ENCODE measurements at regions of chr9 and their contacts with region 1.

Region 1: DNA sequence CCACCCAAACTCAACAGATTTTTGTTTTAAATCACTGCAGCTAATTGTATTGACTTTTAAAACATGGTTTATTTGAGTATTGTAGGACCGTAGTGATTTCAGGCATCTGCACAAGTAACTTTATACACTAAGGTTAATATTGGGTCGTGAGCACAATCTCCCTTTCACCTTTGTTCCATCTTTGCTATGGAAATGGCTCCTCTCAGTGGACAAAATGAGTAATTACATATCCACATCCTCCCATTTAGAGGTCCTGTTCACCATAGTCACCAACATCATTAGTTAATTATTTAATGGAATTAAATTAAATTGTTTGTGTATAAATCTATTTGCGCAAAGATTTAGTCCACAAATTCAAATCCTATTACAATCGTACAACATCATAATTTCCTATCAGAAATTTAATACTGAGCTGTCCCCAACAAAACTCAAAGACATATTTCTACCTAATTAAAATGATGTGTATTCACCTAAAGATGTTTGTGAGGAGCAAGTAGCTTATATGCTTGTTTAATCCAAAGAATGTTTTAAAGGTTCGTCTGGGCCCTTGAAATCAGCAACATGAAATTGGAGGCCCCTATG is 173.0 kb upstream of the DAPK1 start:
- DNase-seq: peak in 1 of 2 donors; percentile 73
- ATAC-seq: peak; percentile 67 to 77 (median 73)
- H3K4me3 ChIP-seq: no peak overlapping the region
- H3K4me3 Mint-ChIP-seq: no peak overlapping the region
- H3K27ac ChIP-seq: no peak overlapping the region
- H3K27ac Mint-ChIP-seq: no peak overlapping the region
- H3K4me1 ChIP-seq: no peaks in the 10 kb centered on the region
- H3K4me1 Mint-ChIP-seq: peaks cover 0 to 11% of the 10 kb centered on the region in 2 donors
- H3K27me3 ChIP-seq: no peaks in the 10 kb centered on the region
- H3K27me3 Mint-ChIP-seq: peaks cover 14 to 17% of the 10 kb centered on the region in 2 donors
- CTCF ChIP-seq: peak; percentile 81

Region 2: GRCh38 chr9:86413966-86414880 is 910.5 kb before region 1 on chr9:
- intact Hi-C with region 1: loop called (anchors 1 kb)
- DNase-seq: peak in 1 of 2 donors; percentile 40
- ATAC-seq: peak in 1 of 3 donors; percentile 53
- H3K4me3 ChIP-seq: no peak overlapping the region
- H3K4me3 Mint-ChIP-seq: no peak overlapping the region
- H3K27ac ChIP-seq: no peak overlapping the region
- H3K27ac Mint-ChIP-seq: no peak overlapping the region
- H3K4me1 ChIP-seq: no peaks in the 10 kb centered on the region
- H3K4me1 Mint-ChIP-seq: no peaks in the 10 kb centered on the region
- H3K27me3 ChIP-seq: no peaks in the 10 kb centered on the region
- H3K27me3 Mint-ChIP-seq: peaks cover 11 to 14% of the 10 kb centered on the region in 2 donors
- CTCF ChIP-seq: peak; percentile 83

Region 3: GRCh38 chr9:86434039-86434726 is 890.5 kb before region 1 on chr9:
- intact Hi-C with region 1: loop called (anchors 1 kb)
- DNase-seq: peak in 1 of 2 donors; percentile 56
- ATAC-seq: peak in 1 of 3 donors; percentile 62
- H3K4me3 ChIP-seq: no peak overlapping the region
- H3K4me3 Mint-ChIP-seq: no peak overlapping the region
- H3K27ac ChIP-seq: no peak overlapping the region
- H3K27ac Mint-ChIP-seq: no peak overlapping the region
- H3K4me1 ChIP-seq: no peaks in the 10 kb centered on the region
- H3K4me1 Mint-ChIP-seq: no peaks in the 10 kb centered on the region
- H3K27me3 ChIP-seq: peaks cover 2% of the 10 kb centered on the region
- H3K27me3 Mint-ChIP-seq: peaks cover 29 to 52% of the 10 kb centered on the region in 2 donors
- CTCF ChIP-seq: peak; percentile 64

Region 4: DNA sequence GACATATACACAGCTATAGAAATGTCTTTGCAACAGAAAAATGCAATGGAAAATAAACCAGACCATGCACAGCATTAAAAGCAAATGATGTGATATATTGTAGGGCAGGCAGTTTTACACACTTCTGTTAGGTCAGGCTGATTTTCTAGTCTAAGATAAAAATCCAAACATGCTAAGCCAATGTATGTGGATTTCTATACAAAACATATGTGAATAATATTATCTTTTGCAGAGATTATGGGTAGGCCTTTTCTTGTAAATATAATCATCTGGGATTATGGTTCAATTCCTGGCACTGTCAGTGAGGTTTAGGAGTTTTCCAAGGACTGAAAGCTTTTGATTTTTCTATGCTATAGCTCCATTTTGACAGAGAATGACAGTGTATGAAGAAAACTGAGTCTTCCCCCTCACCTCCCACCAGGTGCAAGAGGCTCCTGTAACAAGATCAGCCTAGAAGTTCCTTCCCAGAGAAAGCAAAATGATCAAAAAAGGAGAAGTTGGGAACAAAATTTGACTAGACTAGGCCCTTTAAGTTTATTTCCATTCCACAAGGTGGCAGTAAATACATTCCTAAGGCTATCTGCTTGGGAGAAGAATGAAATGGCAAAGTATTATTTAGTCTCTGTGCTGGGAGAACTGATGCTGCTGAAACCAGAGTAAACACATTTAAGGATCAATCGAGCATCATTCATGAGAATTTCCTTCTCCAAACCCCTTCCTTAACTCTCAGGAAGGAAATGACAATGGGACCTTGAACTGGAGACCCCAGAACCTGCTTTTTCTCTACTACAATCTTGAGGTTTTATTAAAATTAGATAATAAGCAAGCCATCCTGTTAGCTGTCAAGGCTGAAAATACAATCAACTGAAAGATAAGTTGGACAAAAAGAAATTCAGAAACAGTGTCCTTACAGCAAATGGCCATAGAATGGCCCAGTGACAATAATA is 837.5 kb before region 1 on chr9:
- intact Hi-C with region 1: loop called (anchors 1 kb)
- DNase-seq: peak in 1 of 2 donors; percentile 32
- ATAC-seq: no peak
- H3K4me3 ChIP-seq: no peak overlapping the region
- H3K4me3 Mint-ChIP-seq: no peak overlapping the region
- H3K27ac ChIP-seq: no peak overlapping the region
- H3K27ac Mint-ChIP-seq: no peak overlapping the region
- H3K4me1 ChIP-seq: no peaks in the 10 kb centered on the region
- H3K4me1 Mint-ChIP-seq: peaks cover 9 to 10% of the 10 kb centered on the region in 2 donors
- H3K27me3 ChIP-seq: no peaks in the 10 kb centered on the region
- H3K27me3 Mint-ChIP-seq: peaks cover 2 to 3% of the 10 kb centered on the region in 2 donors
- CTCF ChIP-seq: peak; percentile 40

Region 5: DNA sequence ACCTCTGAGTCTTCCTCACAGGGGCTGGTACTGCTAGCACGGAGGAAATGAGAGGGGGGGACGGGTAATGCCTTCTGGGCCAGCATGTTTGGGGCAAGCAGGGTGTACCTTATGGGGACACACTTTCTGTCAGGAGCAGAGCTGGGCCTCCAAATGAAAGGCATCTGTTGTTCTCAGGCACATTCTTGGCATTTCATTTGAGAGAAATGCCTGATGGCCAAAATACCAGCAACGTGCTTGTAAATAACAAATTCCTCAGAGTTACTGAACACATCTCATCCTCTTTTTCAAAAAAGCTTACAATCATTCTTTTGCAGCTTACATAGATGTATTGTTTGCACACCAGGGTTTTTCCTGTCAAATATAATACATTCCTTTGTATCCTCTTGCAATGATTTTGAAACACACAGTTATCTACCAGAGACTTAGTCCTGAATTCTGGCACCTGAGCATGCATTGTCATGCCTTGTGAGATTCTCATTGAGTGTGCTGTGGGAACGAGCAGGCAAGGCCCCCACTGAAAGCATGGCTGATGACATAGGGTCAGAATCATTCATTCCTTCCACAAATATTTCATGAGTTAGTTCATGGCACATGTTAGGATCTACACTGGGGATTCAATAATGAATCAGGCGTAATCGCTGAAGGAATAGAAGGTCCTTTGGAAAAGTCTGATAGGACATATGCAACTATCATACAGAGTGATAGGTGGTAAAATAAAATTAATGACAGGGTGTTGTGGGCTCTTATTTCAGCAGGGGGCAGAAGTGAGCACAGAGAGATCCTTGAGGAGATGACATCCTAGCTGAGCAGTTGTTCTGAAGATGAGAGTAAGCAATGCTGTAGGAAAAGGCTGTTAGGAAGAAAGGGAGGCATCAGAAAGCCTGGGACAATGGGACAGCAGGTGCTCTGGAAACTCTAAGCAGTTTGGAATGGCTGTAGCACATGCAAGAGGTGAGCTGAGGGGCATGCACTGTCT is 709.5 kb before region 1 on chr9:
- intact Hi-C with region 1: loop called (anchors 1 kb)
- DNase-seq: peak in 1 of 2 donors; percentile 23
- ATAC-seq: no peak
- H3K4me3 ChIP-seq: no peak overlapping the region
- H3K4me3 Mint-ChIP-seq: no peak overlapping the region
- H3K27ac ChIP-seq: no peak overlapping the region
- H3K27ac Mint-ChIP-seq: no peak overlapping the region
- H3K4me1 ChIP-seq: no peaks in the 10 kb centered on the region
- H3K4me1 Mint-ChIP-seq: no peaks in the 10 kb centered on the region
- H3K27me3 ChIP-seq: no peaks in the 10 kb centered on the region
- H3K27me3 Mint-ChIP-seq: peaks cover 0 to 2% of the 10 kb centered on the region in 2 donors
- CTCF ChIP-seq: peak; percentile 16

Region 6: GRCh38 chr9:86637515-86637914 is 687.2 kb before region 1 on chr9:
- intact Hi-C with region 1: loop called (anchors 5 kb)
- DNase-seq: peak; percentile 17 to 24
- ATAC-seq: peak in 1 of 3 donors; percentile 57
- H3K4me3 ChIP-seq: no peak overlapping the region
- H3K4me3 Mint-ChIP-seq: no peak overlapping the region
- H3K27ac ChIP-seq: no peak overlapping the region
- H3K27ac Mint-ChIP-seq: no peak overlapping the region
- H3K4me1 ChIP-seq: no peaks in the 10 kb centered on the region
- H3K4me1 Mint-ChIP-seq: no peaks in the 10 kb centered on the region
- H3K27me3 ChIP-seq: no peaks in the 10 kb centered on the region
- H3K27me3 Mint-ChIP-seq: peaks cover 27 to 49% of the 10 kb centered on the region in 2 donors
- CTCF ChIP-seq: peak; percentile 25

Region 7: GRCh38 chr9:87107072-87107471 is 217.6 kb before region 1 on chr9:
- intact Hi-C with region 1: loop called (anchors 2 kb)
- DNase-seq: peak in 1 of 2 donors; percentile 7
- ATAC-seq: no peak
- H3K4me3 ChIP-seq: no peak overlapping the region
- H3K4me3 Mint-ChIP-seq: no peak overlapping the region
- H3K27ac ChIP-seq: no peak overlapping the region
- H3K27ac Mint-ChIP-seq: no peak overlapping the region
- H3K4me1 ChIP-seq: no peaks in the 10 kb centered on the region
- H3K4me1 Mint-ChIP-seq: no peaks in the 10 kb centered on the region
- H3K27me3 ChIP-seq: peaks cover 2% of the 10 kb centered on the region
- H3K27me3 Mint-ChIP-seq: peaks cover 9 to 18% of the 10 kb centered on the region in 2 donors
- CTCF ChIP-seq: no peak

Measured in natural killer cell (primary cell).